Activated CD8-positive, alpha-beta T cell treated with anti-CD3 and anti-CD28 coated beads, Interleukin-2, amount 10 ng/mL, durations not matched to agents 7 days and 5 days (primary cell): ENCODE measurements at regions of chr14 and their contacts with region 1.

Region 1: GRCh38 chr14:93939304-93940229 is 12.4 kb downstream of the FAM181A start:
- DNase-seq: peak; percentile 93
- ATAC-seq: peak; percentile 98
- H3K4me3 Mint-ChIP-seq: peak overlapping the region; percentile 49
- H3K27ac Mint-ChIP-seq: peak overlapping the region; percentile 68
- H3K4me1 Mint-ChIP-seq: peaks cover 21% of the 10 kb centered on the region
- H3K27me3 Mint-ChIP-seq: no peaks in the 10 kb centered on the region

Region 2: GRCh38 chr14:93788543-93789227 is 150.9 kb before region 1 on chr14:
- CTCF ChIA-PET with region 1: no interaction called
- POLR2A ChIA-PET with region 1: no interaction called
- DNase-seq: no peak
- ATAC-seq: no peak
- H3K4me3 Mint-ChIP-seq: no peak overlapping the region
- H3K27ac Mint-ChIP-seq: no peak overlapping the region
- H3K4me1 Mint-ChIP-seq: no peaks in the 10 kb centered on the region
- H3K27me3 Mint-ChIP-seq: peaks cover 64% of the 10 kb centered on the region

Region 3: DNA sequence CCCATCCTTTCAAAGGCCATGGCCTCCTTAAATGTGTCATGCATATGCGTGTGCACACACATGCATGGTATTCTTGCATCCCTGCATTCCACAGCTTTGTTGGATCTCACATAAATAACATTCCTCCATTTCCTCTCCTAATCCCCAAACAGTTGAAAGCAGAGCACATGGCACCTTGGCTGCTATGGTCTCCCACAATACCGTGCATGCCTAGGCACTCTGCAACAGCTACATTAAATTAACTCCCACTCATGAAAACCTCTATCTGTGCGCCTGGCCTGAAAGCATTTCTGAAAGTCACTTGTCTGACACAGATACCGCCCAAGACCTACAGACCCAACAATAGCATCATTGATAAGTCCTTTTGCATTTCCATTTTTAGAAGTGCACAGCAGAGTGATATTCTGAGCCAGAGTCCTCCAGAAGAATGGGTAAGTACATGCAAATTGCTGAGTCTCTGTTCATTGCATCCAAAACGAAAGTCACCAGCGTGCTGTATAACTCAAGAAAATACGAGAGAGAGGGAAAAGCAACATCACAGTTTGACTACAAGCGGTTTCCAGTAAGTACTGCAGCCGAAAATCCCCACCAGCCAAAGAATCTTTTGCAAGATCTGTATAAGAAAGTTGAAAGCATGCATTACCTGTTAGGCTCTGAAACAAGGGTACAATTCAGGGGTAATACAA is 36.4 kb after region 1 on chr14:
- CTCF ChIA-PET with region 1: interaction called, 366 read pairs
- POLR2A ChIA-PET with region 1: interaction called, 25 read pairs
- DNase-seq: no peak
- ATAC-seq: no peak
- H3K4me3 Mint-ChIP-seq: peak overlapping the region; percentile 48
- H3K27ac Mint-ChIP-seq: peak overlapping the region; percentile 82
- H3K4me1 Mint-ChIP-seq: peaks cover 94% of the 10 kb centered on the region
- H3K27me3 Mint-ChIP-seq: no peaks in the 10 kb centered on the region

Region 4: GRCh38 chr14:94009767-94010166 is 70.2 kb after region 1 on chr14:
- CTCF ChIA-PET with region 1: interaction called, 117 read pairs
- POLR2A ChIA-PET with region 1: interaction called, 3 read pairs
- DNase-seq: no peak
- ATAC-seq: no peak
- H3K4me3 Mint-ChIP-seq: no peak overlapping the region
- H3K27ac Mint-ChIP-seq: no peak overlapping the region
- H3K4me1 Mint-ChIP-seq: peaks cover 62% of the 10 kb centered on the region
- H3K27me3 Mint-ChIP-seq: peaks cover 15% of the 10 kb centered on the region

Region 5: DNA sequence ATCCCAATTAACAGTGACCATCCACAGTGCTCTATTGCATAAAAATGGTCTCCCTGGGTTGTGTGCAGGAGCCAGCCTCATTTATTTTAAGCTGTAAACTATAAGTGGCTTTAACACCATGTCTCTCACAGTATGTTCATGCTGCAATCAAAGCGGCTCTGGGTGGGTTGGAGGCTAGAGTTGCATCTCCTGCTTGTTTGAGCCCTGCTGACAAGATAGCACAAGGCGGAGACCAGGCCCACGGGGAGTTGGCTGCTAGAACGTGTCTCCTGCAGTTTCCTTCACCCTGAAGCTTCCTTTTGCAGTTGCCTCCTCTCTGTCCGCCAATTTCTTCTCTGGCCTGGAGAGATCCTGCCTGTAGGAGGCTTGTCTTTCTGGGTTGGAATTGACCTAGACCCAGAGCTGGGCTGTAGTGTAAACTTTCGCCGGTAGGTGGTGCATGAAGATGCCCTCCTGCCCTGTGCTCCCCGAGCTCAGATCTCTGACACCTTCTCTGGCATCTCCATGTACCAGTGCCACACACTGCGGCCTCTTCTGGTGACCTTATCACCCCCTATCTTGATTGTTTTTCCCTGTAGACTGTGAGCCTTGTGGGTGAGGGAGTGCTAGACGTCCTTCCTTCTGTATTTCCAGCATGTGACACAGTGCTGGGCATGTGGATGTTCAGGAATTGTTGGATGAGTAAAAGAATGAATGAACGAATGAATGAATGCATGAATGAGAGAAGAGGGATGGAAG is 96.9 kb after region 1 on chr14:
- CTCF ChIA-PET with region 1: interaction called, 57 read pairs
- POLR2A ChIA-PET with region 1: interaction called, 4 read pairs
- DNase-seq: peak; percentile 86
- ATAC-seq: peak; percentile 97
- H3K4me3 Mint-ChIP-seq: no peak overlapping the region
- H3K27ac Mint-ChIP-seq: no peak overlapping the region
- H3K4me1 Mint-ChIP-seq: peaks cover 7% of the 10 kb centered on the region
- H3K27me3 Mint-ChIP-seq: peaks cover 2% of the 10 kb centered on the region

Region 6: DNA sequence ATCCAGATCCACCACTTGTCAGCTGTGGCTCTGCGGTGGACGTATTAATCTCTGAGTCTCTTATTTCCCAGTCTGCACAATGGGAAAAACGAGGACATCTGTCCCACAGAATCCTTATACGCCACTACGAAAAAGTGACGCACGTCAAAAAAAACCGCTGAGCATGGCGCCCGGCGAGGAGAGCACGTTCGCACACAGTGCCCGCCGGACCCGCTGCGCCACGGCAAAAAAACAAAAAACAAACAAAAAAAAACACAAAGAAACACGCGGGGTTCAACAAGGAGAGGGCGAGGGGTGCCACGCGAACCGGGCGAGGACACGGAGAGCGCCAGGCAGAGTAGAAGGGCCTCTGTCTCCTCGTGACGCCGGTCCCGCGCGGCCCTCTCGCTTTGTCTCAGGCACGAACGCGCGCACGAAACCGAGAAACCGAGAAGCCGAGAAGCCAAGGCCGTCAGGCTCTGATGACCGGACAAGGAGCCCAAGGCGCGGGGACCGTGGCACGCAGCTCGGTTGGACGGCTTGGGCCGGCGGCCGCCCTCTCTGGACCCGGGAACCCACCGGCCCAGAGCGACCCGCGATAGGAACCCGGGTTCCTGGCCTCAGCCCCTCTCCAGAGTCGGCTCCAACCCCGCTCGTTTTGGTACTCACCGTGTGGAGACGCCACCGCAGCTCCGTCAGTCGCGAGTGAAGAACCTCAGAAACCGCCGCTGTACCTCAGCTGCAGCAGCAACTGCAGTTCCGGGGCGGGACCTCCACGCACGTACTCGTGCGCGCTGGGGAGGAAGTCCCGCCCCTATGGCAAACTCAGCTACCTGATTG is 141.1 kb after region 1 on chr14 and contains the start of gene DDX24:
- CTCF ChIA-PET with region 1: interaction called, 29 read pairs
- POLR2A ChIA-PET with region 1: interaction called, 3 read pairs
- DNase-seq: peak; percentile 98
- ATAC-seq: peak; percentile 96
- H3K4me3 Mint-ChIP-seq: peak within 1 kb of the TSS; percentile 99
- H3K27ac Mint-ChIP-seq: peak within 1 kb of the TSS; percentile 99
- H3K4me1 Mint-ChIP-seq: peaks cover 52% of the 10 kb centered on the region
- H3K27me3 Mint-ChIP-seq: no peaks in the 10 kb centered on the region
- total RNA-seq, gene DDX24: 172 to 184 TPM

Region 7: DNA sequence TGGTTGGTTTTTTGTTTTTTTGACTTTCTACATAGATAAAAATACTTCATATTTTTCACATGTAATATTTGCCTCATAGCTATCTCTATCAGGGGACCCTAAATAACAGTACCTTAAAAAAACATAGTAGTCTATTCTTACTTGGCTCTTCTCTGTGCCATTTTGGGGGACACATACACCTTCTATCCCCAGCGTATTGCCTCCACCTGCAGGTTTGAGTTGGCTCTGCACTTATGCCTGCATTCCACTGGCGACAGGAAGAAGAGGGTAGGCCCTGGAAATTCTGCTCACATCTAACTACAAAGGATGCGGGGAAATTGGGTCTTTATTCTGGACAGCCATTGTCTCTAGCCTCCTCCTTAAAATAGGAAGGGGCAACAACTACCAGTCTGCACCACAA is 203.7 kb after region 1 on chr14:
- CTCF ChIA-PET with region 1: interaction called, 19 read pairs
- POLR2A ChIA-PET with region 1: no interaction called
- DNase-seq: peak; percentile 49
- ATAC-seq: no peak
- H3K4me3 Mint-ChIP-seq: no peak overlapping the region
- H3K27ac Mint-ChIP-seq: no peak overlapping the region
- H3K4me1 Mint-ChIP-seq: peaks cover 27% of the 10 kb centered on the region
- H3K27me3 Mint-ChIP-seq: peaks cover 11% of the 10 kb centered on the region